Cardiac septum (tissue), 1 donor: ENCODE measurements at regions of chr6 and their contacts with region 1.

Region 1: DNA sequence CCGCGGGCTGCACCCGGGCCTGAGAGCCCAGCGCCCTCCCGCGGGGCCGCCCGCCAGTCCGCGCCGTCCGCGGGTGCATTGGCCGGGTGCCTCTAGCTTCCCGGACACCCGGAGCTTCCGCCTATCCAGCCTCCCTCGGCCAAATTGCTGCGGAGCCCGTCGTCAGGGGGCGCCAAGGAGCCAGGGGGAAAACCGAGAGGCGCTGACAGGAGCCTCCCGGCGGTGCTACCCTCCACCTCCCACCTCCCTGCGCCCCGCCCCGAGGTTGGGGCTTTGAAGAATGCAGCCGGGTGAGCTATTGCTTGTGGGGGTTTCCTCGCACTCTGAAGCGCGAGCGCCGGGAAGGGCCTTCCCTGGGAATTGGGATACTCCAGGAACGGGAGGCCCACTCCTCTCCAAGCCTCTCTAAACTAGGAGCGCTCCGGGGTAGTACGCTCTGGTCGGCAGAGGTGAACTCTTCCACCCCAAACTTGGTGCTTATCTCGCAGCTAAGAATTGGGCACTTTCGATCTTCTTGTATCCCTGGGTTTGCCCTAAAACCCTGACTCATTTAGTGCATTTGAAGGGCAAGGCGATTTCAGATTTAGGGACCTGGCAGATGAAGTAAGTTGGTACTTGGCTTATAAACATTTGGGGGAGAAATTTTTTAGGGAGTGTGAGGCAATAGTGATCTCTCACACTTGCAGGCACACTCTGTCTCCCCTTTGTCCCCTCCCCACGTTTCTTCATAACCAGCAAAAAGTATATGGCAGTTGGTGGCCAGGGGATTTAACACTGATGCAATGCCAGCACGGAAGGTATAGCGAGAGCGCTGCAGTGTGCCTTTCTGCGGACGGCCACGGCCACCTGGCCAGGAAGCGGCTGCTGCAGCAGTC is 501 bp downstream of the BEND6 start:
- DNase-seq: peak; percentile 90

Region 2: GRCh38 chr6:56914798-56915658 is 40.4 kb before region 1 on chr6:
- intact Hi-C with region 1: loop called (anchors 5 kb)
- DNase-seq: no peak

Region 3: GRCh38 chr6:57127763-57128162 is 172.4 kb after region 1 on chr6:
- intact Hi-C with region 1: no loop called
- DNase-seq: no peak

Region 4: GRCh38 chr6:57172136-57173055 is 217.0 kb after region 1 on chr6 and contains the start of gene BAG2:
- intact Hi-C with region 1: loop called (anchors 10 kb)
- DNase-seq: peak; percentile 94
- total RNA-seq, gene BAG2: 16.9 TPM